ENCODE measurements at regions of chr4 and their contacts with region 1.

Region 1: DNA sequence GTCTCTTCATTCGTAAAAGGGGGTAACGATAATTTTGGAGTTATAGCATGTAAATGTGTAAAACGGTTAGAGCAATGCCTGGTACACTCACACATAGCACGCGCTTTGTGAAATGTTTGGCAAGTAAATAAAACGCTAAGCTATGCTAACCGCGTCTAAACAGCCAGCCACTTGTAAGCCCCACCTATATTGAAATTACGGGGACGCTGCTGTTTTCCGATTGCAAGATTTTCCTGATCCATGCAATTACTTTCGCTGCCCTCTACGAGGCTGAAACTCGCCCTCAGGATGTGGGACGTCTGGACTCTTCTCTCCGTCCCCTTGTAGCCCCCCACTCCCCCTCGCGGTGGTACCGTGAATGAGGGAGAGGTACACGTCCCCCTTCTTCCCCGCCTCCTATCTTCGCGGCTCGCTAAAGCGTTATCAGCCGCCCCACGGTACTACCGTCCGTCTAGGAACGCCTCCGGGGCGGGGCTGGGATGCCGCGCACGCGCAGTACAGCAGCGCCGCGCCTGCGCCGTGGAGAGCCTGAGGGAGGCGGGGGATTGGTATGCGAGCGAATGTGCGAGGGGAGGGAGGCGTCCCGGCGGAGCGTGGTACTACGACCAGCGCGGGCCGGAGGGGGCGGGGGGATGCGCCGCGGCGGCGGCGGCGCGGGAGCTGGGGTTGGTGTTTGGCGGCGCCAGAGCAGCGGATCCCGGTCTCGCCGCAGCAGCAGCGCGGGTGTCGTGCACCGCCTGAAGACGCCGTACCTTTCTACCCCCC is at the start of gene STIM2:
- DNase-seq: peak; percentile 97 to 99
- ATAC-seq: peak; percentile 96
- H3K4me3 ChIP-seq: peak within 1 kb of the TSS; percentile 80 to 89
- H3K27ac ChIP-seq: peak within 1 kb of the TSS; percentile 53 to 70
- H3K4me1 ChIP-seq: peaks cover 2 to 3% of the 10 kb centered on the region in 2 donors
- H3K27me3 ChIP-seq: no peaks in the 10 kb centered on the region
- total RNA-seq, gene STIM2: 16.1 to 31.2 TPM

Region 2: GRCh38 chr4:26028793-26029567 is 831.4 kb before region 1 on chr4:
- intact Hi-C with region 1: loop called in 1 of 2 experiments (anchors 10 kb)
- DNase-seq: peak; percentile 83 to 93
- ATAC-seq: peak; percentile 84
- H3K4me3 ChIP-seq: no peak overlapping the region
- H3K27ac ChIP-seq: no peak overlapping the region
- H3K4me1 ChIP-seq: peaks cover 2 to 6% of the 10 kb centered on the region in 2 donors
- H3K27me3 ChIP-seq: no peaks in the 10 kb centered on the region

Region 3: GRCh38 chr4:26320538-26321325 is 539.6 kb before region 1 on chr4 and contains the start of gene RBPJ:
- intact Hi-C with region 1: loop called (anchors 10 kb)
- DNase-seq: peak; percentile 95 to 98
- ATAC-seq: peak; percentile 92
- H3K4me3 ChIP-seq: peak within 1 kb of the TSS; percentile 67 to 84
- H3K27ac ChIP-seq: peak within 1 kb of the TSS; percentile 51 to 88
- H3K4me1 ChIP-seq: peaks cover 0 to 2% of the 10 kb centered on the region in 2 donors
- H3K27me3 ChIP-seq: no peaks in the 10 kb centered on the region
- total RNA-seq, gene RBPJ: 83.7 to 162 TPM

Region 4: GRCh38 chr4:26583865-26584652 is 276.3 kb before region 1 on chr4 and contains the start of gene TBC1D19:
- intact Hi-C with region 1: loop called in 1 of 2 experiments (anchors 5 kb)
- DNase-seq: peak; percentile 93 to 94
- ATAC-seq: peak; percentile 98
- H3K4me3 ChIP-seq: peak within 1 kb of the TSS; percentile 75 to 89
- H3K27ac ChIP-seq: peak within 1 kb of the TSS in 1 of 2 donors; percentile 38
- H3K4me1 ChIP-seq: no peaks in the 10 kb centered on the region
- H3K27me3 ChIP-seq: no peaks in the 10 kb centered on the region
- total RNA-seq, gene TBC1D19: 9.1 to 13.2 TPM

Region 5: DNA sequence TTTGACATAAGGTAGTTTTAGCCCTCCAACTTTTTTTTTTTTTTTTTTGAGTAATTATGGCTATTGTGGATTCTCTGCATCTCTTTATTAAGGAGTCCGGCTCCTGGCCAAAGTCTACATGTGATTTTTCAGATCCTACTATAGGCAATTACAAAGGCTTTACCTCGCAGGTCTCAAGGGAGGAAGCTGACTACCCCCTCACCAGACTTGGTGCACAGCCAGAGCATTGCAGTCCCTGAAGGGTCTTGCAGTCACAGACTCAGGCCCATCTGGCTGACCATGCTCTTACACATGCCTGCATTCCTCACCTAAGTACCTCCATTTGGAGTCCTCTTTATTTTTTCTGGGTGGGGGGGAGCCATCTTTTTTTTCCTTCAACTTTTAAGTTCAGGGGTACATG is 88.2 kb before region 1 on chr4:
- intact Hi-C with region 1: no loop called
- DNase-seq: no peak
- ATAC-seq: no peak
- H3K4me3 ChIP-seq: no peak overlapping the region
- H3K27ac ChIP-seq: no peak overlapping the region
- H3K4me1 ChIP-seq: no peaks in the 10 kb centered on the region
- H3K27me3 ChIP-seq: no peaks in the 10 kb centered on the region

Region 6: DNA sequence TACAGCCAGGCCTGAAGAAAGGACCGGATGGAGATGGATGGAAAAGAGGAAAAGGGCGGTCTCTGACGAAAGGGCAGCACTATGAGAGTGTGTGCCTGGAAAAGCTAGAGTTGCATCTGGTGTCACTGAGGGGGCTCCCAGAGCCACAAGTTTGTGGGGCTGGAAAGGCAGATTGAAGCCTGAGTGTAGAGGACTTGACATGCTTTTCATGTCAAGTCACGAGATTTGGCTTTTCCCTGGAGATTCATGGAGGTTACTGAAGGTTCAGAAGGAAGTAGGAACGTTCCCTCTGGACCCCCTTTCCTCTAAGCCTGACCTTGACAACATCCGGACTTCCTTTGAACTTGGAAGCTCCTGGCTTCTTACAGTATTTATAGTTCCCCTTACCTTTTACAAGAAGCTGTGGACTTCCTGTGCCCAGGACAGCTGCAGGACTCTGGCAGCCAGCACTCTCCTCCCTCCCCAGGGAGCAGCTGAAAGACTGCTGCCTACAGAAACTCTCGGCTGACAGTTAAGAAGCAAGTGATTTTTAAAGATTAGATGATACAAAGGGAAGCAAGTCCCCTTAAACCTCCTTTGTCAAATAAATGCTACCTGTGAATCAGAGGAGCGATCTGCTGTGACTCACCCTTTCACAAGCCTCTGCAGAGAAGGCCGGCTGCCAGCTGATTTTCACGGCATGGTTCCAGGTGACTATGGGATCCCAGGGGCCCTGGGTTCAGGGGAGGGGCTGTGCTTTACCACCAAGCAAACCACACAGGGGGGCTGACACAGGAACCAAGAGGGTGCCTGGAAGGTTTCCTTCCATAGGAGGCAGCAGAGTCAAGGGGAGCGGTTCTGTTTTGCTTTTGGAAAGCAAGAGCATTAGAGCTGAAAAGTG is 72.6 kb before region 1 on chr4:
- intact Hi-C with region 1: loop called in 1 of 2 experiments (anchors 10 kb)
- DNase-seq: peak; percentile 57 to 83
- ATAC-seq: peak; percentile 39
- H3K4me3 ChIP-seq: no peak overlapping the region
- H3K27ac ChIP-seq: no peak overlapping the region
- H3K4me1 ChIP-seq: peaks cover 3 to 8% of the 10 kb centered on the region in 2 donors
- H3K27me3 ChIP-seq: peaks cover 0 to 1% of the 10 kb centered on the region in 2 donors

Region 7: GRCh38 chr4:27000820-27001219 is 140.5 kb after region 1 on chr4:
- intact Hi-C with region 1: loop called in 1 of 2 experiments (anchors 10 kb)
- DNase-seq: no peak
- ATAC-seq: no peak
- H3K4me3 ChIP-seq: no peak overlapping the region
- H3K27ac ChIP-seq: no peak overlapping the region
- H3K4me1 ChIP-seq: peaks cover 0 to 2% of the 10 kb centered on the region in 2 donors
- H3K27me3 ChIP-seq: no peaks in the 10 kb centered on the region

Region 8: GRCh38 chr4:27010334-27010940 is 150.1 kb after region 1 on chr4:
- intact Hi-C with region 1: loop called (anchors 5 to 10 kb)
- DNase-seq: peak; percentile 69 to 82
- ATAC-seq: peak; percentile 87
- H3K4me3 ChIP-seq: no peak overlapping the region
- H3K27ac ChIP-seq: no peak overlapping the region
- H3K4me1 ChIP-seq: no peaks in the 10 kb centered on the region
- H3K27me3 ChIP-seq: no peaks in the 10 kb centered on the region